Activated CD4-positive, alpha-beta T cell treated with anti-CD3 and anti-CD28 coated beads for 36 hours (primary cell): ENCODE measurements at regions of chr21 and their contacts with region 1.

Region 1: DNA sequence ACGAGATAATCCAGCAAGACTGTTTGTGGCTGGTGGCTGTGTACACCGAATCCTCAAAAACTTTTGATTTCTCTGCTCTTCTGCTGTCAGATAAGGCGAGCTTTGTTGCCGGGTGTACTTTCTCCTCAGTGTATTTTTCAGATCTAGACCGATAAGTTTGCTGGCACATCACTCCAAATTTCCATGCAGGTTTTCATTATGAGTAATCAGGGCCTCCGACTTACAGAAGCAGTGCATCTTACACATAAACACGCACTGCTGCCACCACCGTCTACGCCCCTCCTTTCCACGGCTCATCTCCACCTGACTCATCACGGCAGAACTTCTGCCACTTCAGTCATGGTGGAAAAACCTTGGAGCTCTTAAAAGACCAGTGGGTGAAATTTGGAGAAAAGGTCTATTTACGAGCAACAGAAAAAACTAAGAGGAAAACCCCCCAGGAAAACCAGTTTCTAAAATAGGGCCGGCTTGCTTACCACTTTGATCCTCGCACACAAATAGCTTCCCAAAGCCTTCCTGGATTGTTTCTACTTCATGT is 7.7 kb downstream of the ZBTB21 start:
- DNase-seq: peak; percentile 90
- ATAC-seq: peak; percentile 92
- H3K4me3 Mint-ChIP-seq: peak overlapping the region; percentile 52
- H3K27ac Mint-ChIP-seq: peak overlapping the region; percentile 93
- H3K4me1 Mint-ChIP-seq: peaks cover 61% of the 10 kb centered on the region
- H3K27me3 Mint-ChIP-seq: no peaks in the 10 kb centered on the region

Region 2: DNA sequence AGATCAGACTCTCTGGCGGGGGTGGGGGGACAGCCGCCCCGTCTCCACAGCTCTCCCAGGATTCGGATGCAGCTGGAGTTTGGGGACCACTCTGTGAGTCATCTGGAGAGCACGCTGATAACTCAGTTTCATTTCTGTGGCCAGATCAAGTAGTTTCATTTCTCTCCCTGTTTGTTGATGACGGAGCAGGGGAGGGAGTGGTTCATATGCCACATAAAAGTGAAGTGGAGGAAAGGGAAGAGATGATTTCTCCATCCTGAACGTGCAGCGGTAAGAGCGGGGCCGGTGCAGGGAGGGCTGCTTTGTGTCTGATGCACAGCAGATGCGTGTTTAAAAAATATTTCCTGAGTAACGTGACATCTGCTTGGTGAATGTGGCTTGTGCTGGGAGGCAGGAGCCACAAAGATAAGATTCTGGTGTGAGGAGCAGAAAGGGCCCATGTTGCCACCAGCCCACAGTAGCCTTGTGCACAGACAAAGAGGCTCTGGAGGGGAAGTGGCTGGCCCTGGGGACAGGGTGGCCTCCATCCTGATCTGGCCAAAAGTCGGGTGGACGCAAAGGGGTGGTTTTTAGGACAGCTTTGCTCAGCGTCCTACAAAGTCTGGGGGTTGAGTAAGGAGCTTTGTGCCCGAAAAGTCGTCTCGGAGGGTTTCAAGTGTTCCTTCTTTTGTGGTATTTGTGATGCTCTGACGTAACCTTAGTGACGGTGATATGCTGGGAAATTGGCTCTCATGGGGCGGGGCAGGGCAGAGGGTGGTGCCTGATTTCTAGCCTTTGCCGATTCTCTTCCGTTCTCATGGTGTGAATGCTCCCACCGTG is 640.5 kb before region 1 on chr21 and contains the start of gene MX2:
- CTCF ChIA-PET with region 1: no interaction called
- POLR2A ChIA-PET with region 1: no interaction called
- intact Hi-C with region 1: loop called in 1 of 2 experiments (anchors 2 kb)
- DNase-seq: peak; percentile 87
- ATAC-seq: peak; percentile 79
- H3K4me3 Mint-ChIP-seq: peak within 1 kb of the TSS; percentile 77
- H3K27ac Mint-ChIP-seq: peak within 1 kb of the TSS; percentile 97
- H3K4me1 Mint-ChIP-seq: peaks cover 56% of the 10 kb centered on the region
- H3K27me3 Mint-ChIP-seq: no peaks in the 10 kb centered on the region
- total RNA-seq, gene MX2: 30.7 to 40.4 TPM

Region 3: DNA sequence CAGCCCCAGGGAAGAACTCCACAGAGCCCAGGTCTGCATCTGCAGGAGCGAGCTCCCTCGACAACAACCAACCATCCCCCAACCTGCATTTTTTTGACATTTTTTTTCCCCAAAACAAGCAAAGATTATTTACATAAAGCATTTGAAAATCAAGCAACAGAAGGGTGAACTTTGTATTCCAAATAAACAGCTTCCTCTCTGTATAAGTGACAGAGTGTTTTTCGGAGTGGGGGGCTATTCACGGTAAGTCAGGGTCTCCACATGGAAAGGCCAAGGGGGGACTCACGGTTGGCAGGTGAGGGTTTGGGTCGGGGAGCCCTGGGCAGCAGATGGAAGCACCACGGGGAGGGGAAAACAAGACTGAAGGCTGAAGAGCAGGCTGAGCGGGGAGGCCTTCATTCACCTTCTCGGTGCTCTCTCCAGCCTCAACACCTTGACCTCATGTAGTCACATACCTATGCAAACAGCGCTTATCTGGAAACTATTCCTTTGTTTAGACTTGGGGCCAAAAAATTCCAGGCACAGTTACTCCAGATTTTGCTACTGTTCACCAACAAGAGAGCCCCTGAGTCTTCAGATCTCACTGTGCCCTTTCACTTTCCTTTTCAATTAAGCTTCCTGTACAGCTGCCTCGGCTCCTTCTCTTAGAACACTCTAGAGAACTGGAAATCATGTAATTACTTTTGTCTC is 76.2 kb before region 1 on chr21:
- CTCF ChIA-PET with region 1: interaction called, 8 read pairs
- POLR2A ChIA-PET with region 1: interaction called, 6 read pairs
- intact Hi-C with region 1: loop called (anchors 1 kb)
- DNase-seq: peak; percentile 35
- ATAC-seq: peak; percentile 82
- H3K4me3 Mint-ChIP-seq: peak overlapping the region; percentile 86
- H3K27ac Mint-ChIP-seq: peak overlapping the region; percentile 99
- H3K4me1 Mint-ChIP-seq: peaks cover 59% of the 10 kb centered on the region
- H3K27me3 Mint-ChIP-seq: no peaks in the 10 kb centered on the region

Region 4: GRCh38 chr21:41966872-41967621 is 35.4 kb before region 1 on chr21:
- CTCF ChIA-PET with region 1: no interaction called
- POLR2A ChIA-PET with region 1: no interaction called
- intact Hi-C with region 1: no loop called
- DNase-seq: no peak
- ATAC-seq: no peak
- H3K4me3 Mint-ChIP-seq: no peak overlapping the region
- H3K27ac Mint-ChIP-seq: no peak overlapping the region
- H3K4me1 Mint-ChIP-seq: no peaks in the 10 kb centered on the region
- H3K27me3 Mint-ChIP-seq: no peaks in the 10 kb centered on the region

Region 5: DNA sequence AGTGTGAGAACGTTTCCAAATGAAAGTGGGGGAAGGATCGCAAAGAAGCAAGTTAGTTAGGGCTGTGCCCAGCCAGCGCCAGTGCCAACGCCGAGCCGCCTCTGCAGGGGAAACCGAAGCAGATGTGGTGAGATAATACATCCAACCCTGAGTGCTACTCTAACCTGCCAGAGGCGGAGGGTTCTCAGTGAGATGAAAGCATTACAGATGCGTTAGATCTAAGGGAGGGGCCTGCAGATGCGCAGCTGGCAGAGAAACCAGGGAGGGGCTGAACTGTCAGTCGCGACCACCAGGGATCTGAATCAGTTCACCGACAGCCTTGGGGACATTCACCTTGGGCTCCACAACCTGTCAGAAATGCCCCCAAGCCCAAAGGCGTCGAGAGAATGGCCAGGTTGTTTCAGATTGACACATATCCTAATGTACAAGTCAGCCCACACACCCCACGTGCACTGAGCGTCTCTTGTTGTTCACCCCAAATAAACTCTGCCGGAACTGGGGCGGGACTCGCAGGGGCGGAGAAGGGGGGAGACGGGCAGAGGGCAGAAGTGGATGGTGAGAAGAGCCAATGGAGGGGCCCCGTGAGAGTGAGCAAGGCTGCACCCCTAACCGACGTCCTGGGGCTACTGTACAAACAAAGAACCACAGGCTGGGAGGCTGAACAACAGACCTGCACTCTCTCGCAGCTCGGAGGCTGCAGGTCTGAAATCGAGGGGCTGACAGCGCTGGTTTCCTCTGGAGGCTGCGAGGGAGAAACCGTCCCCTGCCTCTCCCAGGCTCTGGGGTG is 59.9 kb after region 1 on chr21:
- CTCF ChIA-PET with region 1: no interaction called
- POLR2A ChIA-PET with region 1: interaction called, 3 read pairs
- intact Hi-C with region 1: loop called (anchors 1 to 2 kb)
- DNase-seq: peak; percentile 86
- ATAC-seq: peak; percentile 65
- H3K4me3 Mint-ChIP-seq: peak overlapping the region; percentile 60
- H3K27ac Mint-ChIP-seq: peak overlapping the region; percentile 86
- H3K4me1 Mint-ChIP-seq: peaks cover 43% of the 10 kb centered on the region
- H3K27me3 Mint-ChIP-seq: no peaks in the 10 kb centered on the region

Region 6: DNA sequence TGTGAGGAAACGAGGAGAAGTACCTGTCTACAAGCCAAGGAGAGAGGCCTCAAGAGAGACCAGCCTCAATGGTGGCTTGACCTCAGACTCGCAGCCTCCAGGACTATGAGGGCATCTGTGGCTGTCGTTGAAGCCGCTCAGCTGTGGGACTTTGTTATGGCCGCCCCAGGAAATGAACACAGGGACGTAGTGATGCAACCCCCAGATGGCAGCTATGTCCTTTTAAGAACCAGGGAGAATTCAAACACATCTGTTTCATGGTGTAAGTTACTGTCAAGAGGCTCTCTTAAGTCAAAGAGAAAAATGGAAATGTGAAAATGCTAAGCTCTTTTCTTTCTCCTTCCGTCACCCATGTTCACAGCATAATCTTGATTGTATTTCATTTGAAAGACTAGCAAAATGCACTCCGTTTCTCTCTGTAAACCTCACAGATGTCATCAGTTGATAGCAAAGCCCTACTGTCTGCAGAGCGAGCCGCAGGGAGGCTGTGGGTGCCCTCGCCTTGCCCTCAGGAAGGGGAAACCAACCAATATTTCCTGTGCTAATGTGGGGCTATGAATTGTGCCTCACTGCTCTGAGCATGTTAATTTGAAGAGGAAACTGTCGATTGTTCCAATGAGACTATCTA is 422.5 kb after region 1 on chr21:
- CTCF ChIA-PET with region 1: no interaction called
- POLR2A ChIA-PET with region 1: no interaction called
- intact Hi-C with region 1: loop called in 1 of 2 experiments (anchors 5 kb)
- DNase-seq: peak; percentile 78
- ATAC-seq: peak; percentile 55
- H3K4me3 Mint-ChIP-seq: peak overlapping the region; percentile 64
- H3K27ac Mint-ChIP-seq: peak overlapping the region; percentile 87
- H3K4me1 Mint-ChIP-seq: peaks cover 74% of the 10 kb centered on the region
- H3K27me3 Mint-ChIP-seq: no peaks in the 10 kb centered on the region